B cell (primary cell): ENCODE measurements at regions of chr14 and their contacts with region 1.

Region 1: DNA sequence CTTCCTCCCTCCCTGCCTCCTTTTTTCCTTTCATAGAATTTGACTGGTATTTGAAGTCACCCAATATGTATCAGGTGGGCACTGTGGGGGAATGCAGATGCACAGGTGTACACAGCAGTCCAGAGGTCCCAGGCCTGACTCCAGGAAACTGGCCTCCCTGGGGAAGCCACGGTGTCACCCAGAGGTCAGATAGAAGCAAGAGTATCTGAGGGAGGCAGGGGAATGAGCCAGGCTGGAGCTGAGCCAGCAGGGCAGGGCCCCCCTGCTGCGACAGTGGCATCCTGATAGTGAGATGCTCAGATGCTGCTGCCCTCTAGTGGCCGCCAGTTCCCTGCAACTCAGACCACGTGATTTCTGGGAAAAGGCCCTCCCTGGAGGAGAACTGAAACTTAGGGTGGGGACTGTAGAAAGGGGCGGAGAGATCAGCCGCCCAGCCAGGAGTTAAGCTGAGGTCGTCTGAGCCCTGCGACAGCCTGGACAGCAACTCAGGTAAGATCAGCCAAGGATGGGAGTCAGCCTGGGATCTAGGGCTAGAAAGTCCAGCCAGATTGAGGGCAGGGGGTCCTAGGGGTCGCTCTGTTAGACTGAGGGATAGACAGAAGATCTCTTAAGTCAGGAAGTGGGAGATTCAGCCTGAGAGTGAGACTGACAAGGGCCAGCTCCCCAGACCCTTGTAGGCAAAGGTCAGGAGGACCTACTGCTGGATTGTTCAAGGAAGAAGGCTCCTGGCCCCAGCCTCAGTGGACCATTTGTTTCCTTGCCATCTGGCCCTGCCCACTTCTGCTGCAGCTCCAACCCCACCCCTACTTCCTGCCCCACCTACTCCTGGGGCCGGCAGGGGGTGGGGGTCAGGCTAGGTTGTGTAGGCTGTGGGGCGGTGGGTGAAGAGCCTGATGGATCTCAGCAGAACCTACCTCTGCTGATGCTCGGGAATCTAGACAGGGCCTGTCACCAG is at the start of gene IRF9:
- DNase-seq: peak; percentile 97
- ATAC-seq: peak; percentile 94
- H3K4me3 ChIP-seq: peak within 1 kb of the TSS; percentile 69 to 100 (median 91)
- H3K4me3 Mint-ChIP-seq: peak within 1 kb of the TSS; percentile 100
- H3K27ac ChIP-seq: peak within 1 kb of the TSS; percentile 85 to 88
- H3K27ac Mint-ChIP-seq: peak within 1 kb of the TSS; percentile 99
- H3K4me1 ChIP-seq: peaks cover 29 to 39% of the 10 kb centered on the region in 2 donors
- H3K4me1 Mint-ChIP-seq: peaks cover 42% of the 10 kb centered on the region
- H3K27me3 ChIP-seq: no peaks in the 10 kb centered on the region
- H3K27me3 Mint-ChIP-seq: no peaks in the 10 kb centered on the region
- CTCF ChIP-seq: peak; percentile 81
- total RNA-seq, gene IRF9: 243 and 269 TPM in 2 replicates

Region 2: DNA sequence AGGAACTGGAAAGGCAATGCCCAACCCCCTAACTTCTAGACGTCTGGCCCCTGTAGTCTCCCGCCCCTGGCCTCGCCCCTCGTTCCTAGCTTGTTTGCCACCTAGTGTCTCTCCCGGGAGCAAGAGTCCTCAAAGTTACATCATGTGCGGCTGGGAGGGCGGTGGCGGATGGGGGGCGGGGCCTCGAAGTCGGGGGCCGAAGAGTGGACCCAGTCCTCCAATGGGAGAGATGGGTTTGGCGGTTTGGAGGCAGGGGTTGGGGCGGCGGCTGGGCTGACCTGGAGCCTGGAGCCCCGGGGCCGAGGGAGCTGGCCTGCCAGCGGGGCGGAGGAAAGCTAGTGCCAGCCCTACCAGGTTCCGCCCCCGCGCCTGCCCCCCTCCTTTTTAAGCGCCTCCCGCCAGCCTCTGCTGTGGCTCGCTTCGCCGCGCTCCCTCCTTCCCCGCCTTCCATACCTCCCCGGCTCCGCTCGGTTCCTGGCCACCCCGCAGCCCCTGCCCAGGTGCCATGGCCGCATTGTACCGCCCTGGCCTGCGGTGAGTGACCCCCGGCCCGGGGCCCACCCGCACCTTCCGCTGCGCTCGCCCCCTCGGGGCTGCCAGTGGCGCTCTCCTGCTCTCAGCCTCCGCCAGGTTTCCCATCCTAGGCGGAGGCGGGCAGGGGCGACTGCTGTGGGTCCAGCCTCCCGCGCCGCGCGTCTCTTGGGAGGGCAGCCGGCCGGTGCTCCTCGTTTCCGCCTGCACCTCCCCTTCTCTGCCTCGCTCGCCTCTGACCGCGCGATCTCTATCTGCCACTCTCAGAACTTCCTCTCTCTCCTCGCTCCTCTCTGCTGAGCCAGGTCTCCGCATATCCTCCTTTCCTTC is 67.0 kb before region 1 on chr14 and contains the start of gene PCK2:
- CTCF ChIA-PET with region 1: interaction called, 9 read pairs
- POLR2A ChIA-PET with region 1: interaction called, 7 read pairs
- intact Hi-C with region 1: loop called (anchors 1 kb)
- DNase-seq: peak; percentile 81
- ATAC-seq: peak; percentile 66
- H3K4me3 ChIP-seq: peak within 1 kb of the TSS; percentile 62 to 97 (median 89)
- H3K4me3 Mint-ChIP-seq: peak within 1 kb of the TSS; percentile 95
- H3K27ac ChIP-seq: peak within 1 kb of the TSS; percentile 80 to 95
- H3K27ac Mint-ChIP-seq: peak within 1 kb of the TSS; percentile 92
- H3K4me1 ChIP-seq: peaks cover 5 to 35% of the 10 kb centered on the region in 2 donors
- H3K4me1 Mint-ChIP-seq: peaks cover 38% of the 10 kb centered on the region
- H3K27me3 ChIP-seq: no peaks in the 10 kb centered on the region
- H3K27me3 Mint-ChIP-seq: no peaks in the 10 kb centered on the region
- CTCF ChIP-seq: peak; percentile 28
- total RNA-seq, gene PCK2: 34.1 and 40.4 TPM in 2 replicates

Region 3: DNA sequence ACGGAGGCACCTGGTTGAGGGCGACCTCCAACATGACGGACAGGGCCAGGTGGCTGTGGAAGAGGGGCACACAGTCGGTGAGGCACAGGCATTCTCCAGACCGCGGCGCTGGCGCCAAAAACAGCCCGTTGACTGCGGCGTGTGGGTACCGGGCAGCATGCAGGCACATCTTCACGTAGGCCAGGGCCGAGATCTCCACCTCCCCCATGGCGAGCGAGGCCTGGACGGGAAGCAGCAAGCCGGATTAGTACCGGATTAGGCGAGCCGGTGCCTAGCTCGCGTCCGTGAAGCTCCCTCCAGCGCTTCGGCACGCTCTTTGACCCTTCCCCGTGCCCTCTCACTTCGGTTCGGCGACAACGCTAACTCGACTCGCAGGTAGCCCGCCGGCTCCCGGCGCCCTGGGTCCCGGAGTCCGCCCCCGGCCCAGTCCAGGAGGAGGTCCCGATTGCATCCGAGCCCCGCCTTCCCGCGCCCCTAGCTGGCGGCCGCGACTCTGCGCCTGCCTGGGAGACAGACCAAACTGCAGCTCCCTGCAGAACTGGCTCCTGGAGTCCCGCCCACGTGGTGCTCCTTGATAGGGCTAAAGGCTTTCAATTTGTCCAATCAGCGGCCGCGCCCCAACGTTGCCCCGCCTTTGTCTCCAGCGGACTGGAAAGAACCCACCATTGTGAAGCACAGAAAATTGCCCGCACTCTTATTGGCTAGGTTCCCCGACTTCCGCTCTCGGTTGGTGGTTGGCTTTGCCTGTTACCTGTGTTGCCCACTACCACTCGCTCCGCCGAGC is 19.8 kb before region 1 on chr14 and contains the start of gene EMC9:
- CTCF ChIA-PET with region 1: interaction called, 62 read pairs
- POLR2A ChIA-PET with region 1: interaction called, 17 read pairs
- intact Hi-C with region 1: loop called (anchors 1 kb)
- DNase-seq: peak; percentile 99
- ATAC-seq: peak; percentile 89
- H3K4me3 ChIP-seq: peak within 1 kb of the TSS; percentile 67 to 93 (median 82)
- H3K4me3 Mint-ChIP-seq: peak within 1 kb of the TSS; percentile 96
- H3K27ac ChIP-seq: peak within 1 kb of the TSS; percentile 63 to 80
- H3K27ac Mint-ChIP-seq: peak within 1 kb of the TSS; percentile 95
- H3K4me1 ChIP-seq: peaks cover 33 to 50% of the 10 kb centered on the region in 2 donors
- H3K4me1 Mint-ChIP-seq: peaks cover 64% of the 10 kb centered on the region
- H3K27me3 ChIP-seq: no peaks in the 10 kb centered on the region
- H3K27me3 Mint-ChIP-seq: no peaks in the 10 kb centered on the region
- CTCF ChIP-seq: peak; percentile 37
- total RNA-seq, gene EMC9: 24.7 and 26.4 TPM in 2 replicates

Region 4: DNA sequence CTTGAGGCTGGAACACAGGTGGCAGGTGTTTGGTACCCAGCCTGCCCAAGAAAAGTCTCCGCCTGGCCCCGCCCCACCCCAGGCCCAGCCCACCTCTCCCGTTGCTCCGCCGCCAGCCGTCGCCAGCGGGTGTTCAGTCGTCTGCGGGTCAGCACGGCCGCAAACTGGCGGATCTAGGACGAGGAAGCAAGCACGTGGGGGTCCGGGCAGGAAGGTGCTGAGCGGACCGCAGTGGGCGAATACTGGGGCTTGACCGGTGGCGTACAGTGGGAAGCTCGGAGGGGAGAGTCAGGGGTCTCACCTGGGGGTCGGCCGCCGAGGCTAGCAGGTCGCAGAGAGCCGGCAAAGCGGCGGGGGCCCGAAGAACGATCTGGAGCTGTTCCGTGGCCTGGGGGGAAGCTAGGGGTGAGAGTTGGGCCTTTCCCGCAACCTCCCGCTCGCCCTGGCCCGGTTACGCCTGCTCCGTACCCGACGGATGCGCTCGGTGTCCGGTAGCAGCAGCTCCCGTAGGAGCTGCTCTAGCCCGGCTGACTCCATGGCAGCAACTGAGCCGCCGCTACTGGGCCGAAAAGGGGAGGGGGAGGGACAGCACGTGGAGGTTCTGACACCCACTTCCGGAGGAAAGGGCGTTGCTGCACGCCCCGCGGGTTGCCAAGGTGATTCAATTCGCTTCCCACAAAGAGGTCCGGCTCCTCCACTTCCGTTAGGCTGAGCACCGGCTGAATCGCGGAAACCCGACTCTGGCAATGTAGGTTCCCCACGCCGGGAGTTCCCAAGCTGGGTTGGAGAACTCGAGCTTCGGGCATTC is 27.3 kb after region 1 on chr14 and contains the start of gene IPO4:
- CTCF ChIA-PET with region 1: interaction called, 21 read pairs
- POLR2A ChIA-PET with region 1: interaction called, 8 read pairs
- intact Hi-C with region 1: loop called (anchors 1 kb)
- DNase-seq: peak; percentile 96
- ATAC-seq: peak; percentile 93
- H3K4me3 ChIP-seq: peak within 1 kb of the TSS; percentile 32 to 79 (median 70)
- H3K4me3 Mint-ChIP-seq: peak within 1 kb of the TSS; percentile 93
- H3K27ac ChIP-seq: peak within 1 kb of the TSS; percentile 63 to 86
- H3K27ac Mint-ChIP-seq: peak within 1 kb of the TSS; percentile 87
- H3K4me1 ChIP-seq: peaks cover 14 to 17% of the 10 kb centered on the region in 2 donors
- H3K4me1 Mint-ChIP-seq: peaks cover 35% of the 10 kb centered on the region
- H3K27me3 ChIP-seq: no peaks in the 10 kb centered on the region
- H3K27me3 Mint-ChIP-seq: no peaks in the 10 kb centered on the region
- CTCF ChIP-seq: no peak
- total RNA-seq, gene IPO4: 29.8 and 35.0 TPM in 2 replicates

Region 5: GRCh38 chr14:24232121-24232644 is 71.1 kb after region 1 on chr14 and contains the start of gene NEDD8:
- CTCF ChIA-PET with region 1: interaction called, 3 read pairs
- POLR2A ChIA-PET with region 1: interaction called, 8 read pairs
- intact Hi-C with region 1: loop called (anchors 5 kb)
- DNase-seq: peak; percentile 95
- ATAC-seq: peak; percentile 86
- H3K4me3 ChIP-seq: peak within 1 kb of the TSS; percentile 75 to 100 (median 97)
- H3K4me3 Mint-ChIP-seq: peak within 1 kb of the TSS; percentile 96
- H3K27ac ChIP-seq: peak within 1 kb of the TSS; percentile 36 to 67
- H3K27ac Mint-ChIP-seq: peak within 1 kb of the TSS; percentile 95
- H3K4me1 ChIP-seq: peaks cover 18 to 24% of the 10 kb centered on the region in 2 donors
- H3K4me1 Mint-ChIP-seq: peaks cover 55% of the 10 kb centered on the region
- H3K27me3 ChIP-seq: no peaks in the 10 kb centered on the region
- H3K27me3 Mint-ChIP-seq: no peaks in the 10 kb centered on the region
- CTCF ChIP-seq: no peak
- total RNA-seq, gene NEDD8: 86.6 and 98.5 TPM in 2 replicates

Region 6: GRCh38 chr14:24259252-24259995 is 98.3 kb after region 1 on chr14:
- CTCF ChIA-PET with region 1: no interaction called
- POLR2A ChIA-PET with region 1: no interaction called
- intact Hi-C with region 1: no loop called
- DNase-seq: no peak
- ATAC-seq: no peak
- H3K4me3 ChIP-seq: no peak overlapping the region
- H3K4me3 Mint-ChIP-seq: no peak overlapping the region
- H3K27ac ChIP-seq: no peak overlapping the region
- H3K27ac Mint-ChIP-seq: no peak overlapping the region
- H3K4me1 ChIP-seq: no peaks in the 10 kb centered on the region
- H3K4me1 Mint-ChIP-seq: no peaks in the 10 kb centered on the region
- H3K27me3 ChIP-seq: no peaks in the 10 kb centered on the region
- H3K27me3 Mint-ChIP-seq: no peaks in the 10 kb centered on the region
- CTCF ChIP-seq: no peak